ENCODE measurements at regions of chr6 and their contacts with region 1.

Region 1: GRCh38 chr6:28709478-28710349 is 184.0 kb downstream of the GPX5 start:
- DNase-seq: no peak
- ATAC-seq: no peak
- H3K4me3 ChIP-seq: no peak overlapping the region
- H3K4me3 Mint-ChIP-seq: peak overlapping the region; percentile 24
- H3K27ac ChIP-seq: no peak overlapping the region
- H3K27ac Mint-ChIP-seq: no peak overlapping the region
- H3K4me1 ChIP-seq: no peaks in the 10 kb centered on the region
- H3K4me1 Mint-ChIP-seq: peaks cover 11% of the 10 kb centered on the region
- H3K27me3 ChIP-seq: peaks cover 12 to 13% of the 10 kb centered on the region in 2 experiments
- H3K27me3 Mint-ChIP-seq: peaks cover 78% of the 10 kb centered on the region
- CTCF ChIP-seq: no peak

Region 2: DNA sequence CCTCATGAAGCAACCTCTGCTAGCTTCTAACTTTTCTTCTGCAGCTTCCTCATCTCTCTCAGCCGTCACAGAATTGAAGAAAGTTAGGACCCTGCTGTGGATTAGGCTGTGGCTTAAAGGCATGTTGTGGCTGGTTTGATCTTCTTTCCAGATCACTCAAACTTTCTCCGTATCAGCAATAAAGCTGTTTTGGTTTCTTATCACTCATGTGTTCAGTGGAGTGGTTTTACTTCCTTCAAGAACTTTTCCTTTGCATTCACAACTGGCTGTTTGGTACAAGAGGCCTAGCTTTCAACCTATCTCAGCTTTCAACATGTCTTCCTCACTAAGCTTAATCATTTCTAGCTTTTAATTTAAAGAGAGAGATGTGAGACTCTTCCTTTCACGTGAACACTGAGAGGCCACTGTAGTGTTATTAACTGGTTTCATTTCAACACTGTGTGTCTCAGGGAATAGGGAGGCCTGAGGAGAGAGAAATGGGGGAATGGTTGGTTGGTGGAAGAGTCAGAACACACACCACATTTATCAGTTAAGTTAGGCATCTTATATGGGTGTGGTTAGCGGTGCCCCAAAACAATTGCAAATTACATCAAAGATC is 283.7 kb before region 1 on chr6:
- CTCF ChIA-PET with region 1: no interaction called
- POLR2A ChIA-PET with region 1: no interaction called
- intact Hi-C with region 1: no loop called
- DNase-seq: no peak
- ATAC-seq: no peak
- H3K4me3 ChIP-seq: no peak overlapping the region
- H3K4me3 Mint-ChIP-seq: peak overlapping the region; percentile 1
- H3K27ac ChIP-seq: no peak overlapping the region
- H3K27ac Mint-ChIP-seq: peak overlapping the region; percentile 69
- H3K4me1 ChIP-seq: no peaks in the 10 kb centered on the region
- H3K4me1 Mint-ChIP-seq: peaks cover 7% of the 10 kb centered on the region
- H3K27me3 ChIP-seq: no peaks in the 10 kb centered on the region
- H3K27me3 Mint-ChIP-seq: peaks cover 22% of the 10 kb centered on the region
- CTCF ChIP-seq: no peak

Region 3: DNA sequence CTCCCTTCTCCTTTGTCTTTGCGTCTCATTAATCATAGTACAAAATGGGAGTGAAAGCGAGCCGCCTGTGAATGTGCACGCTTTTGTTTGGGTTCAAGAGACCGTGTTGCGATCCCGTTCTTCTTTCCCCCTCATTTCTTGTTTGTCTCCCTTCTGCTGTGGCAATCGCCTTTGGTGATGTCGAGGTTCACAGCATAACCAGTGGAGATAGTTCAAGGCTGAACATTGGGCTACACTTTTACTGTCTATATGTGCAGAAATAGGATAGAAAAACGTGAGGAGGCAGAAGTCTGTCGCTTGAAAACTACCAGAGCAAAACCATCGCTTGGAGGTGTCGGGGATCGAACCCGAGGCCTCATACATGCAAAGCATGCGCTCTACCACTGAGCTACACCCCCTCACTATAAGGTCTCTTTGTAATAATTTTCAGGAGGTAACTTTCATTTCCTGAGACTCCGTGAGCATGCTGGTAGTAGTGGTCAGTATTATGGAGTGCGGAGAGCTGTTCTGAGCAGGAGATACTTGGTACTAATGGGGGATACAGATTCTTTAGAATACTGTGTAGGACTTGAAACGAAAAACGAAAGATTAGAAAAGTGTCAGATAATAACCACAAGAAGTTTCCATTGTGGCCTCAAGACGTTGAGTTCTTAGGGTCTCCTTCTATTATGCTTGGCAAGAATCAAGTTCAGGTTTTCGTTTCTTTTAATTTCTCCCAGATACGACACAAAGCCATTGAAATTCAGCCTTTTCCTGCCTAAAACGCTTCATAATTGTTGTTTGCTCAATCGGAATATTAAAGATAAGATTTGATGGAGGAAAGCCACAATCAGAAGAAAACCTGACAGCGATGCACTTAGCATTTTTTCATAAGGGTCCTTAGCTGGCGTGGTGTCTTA is 107.4 kb after region 1 on chr6:
- CTCF ChIA-PET with region 1: no interaction called
- POLR2A ChIA-PET with region 1: no interaction called
- intact Hi-C with region 1: loop called in 1 of 2 experiments (anchors 10 kb)
- DNase-seq: no peak
- ATAC-seq: no peak
- H3K4me3 ChIP-seq: no peak overlapping the region
- H3K4me3 Mint-ChIP-seq: no peak overlapping the region
- H3K27ac ChIP-seq: no peak overlapping the region
- H3K27ac Mint-ChIP-seq: no peak overlapping the region
- H3K4me1 ChIP-seq: no peaks in the 10 kb centered on the region
- H3K4me1 Mint-ChIP-seq: peaks cover 16% of the 10 kb centered on the region
- H3K27me3 ChIP-seq: peaks cover 50 to 61% of the 10 kb centered on the region in 2 experiments
- H3K27me3 Mint-ChIP-seq: peaks cover 81% of the 10 kb centered on the region
- CTCF ChIP-seq: no peak

Region 4: GRCh38 chr6:28895134-28895812 is 185.6 kb after region 1 on chr6:
- CTCF ChIA-PET with region 1: no interaction called
- POLR2A ChIA-PET with region 1: no interaction called
- intact Hi-C with region 1: no loop called
- DNase-seq: peak; percentile 83 to 97 (median 90)
- ATAC-seq: peak; percentile 68
- H3K4me3 ChIP-seq: peak overlapping the region; percentile 79 to 80
- H3K4me3 Mint-ChIP-seq: peak overlapping the region; percentile 98
- H3K27ac ChIP-seq: peak overlapping the region; percentile 95 to 98
- H3K27ac Mint-ChIP-seq: peak overlapping the region; percentile 99
- H3K4me1 ChIP-seq: peaks cover 8% of the 10 kb centered on the region
- H3K4me1 Mint-ChIP-seq: peaks cover 18% of the 10 kb centered on the region
- H3K27me3 ChIP-seq: no peaks in the 10 kb centered on the region
- H3K27me3 Mint-ChIP-seq: no peaks in the 10 kb centered on the region
- CTCF ChIP-seq: no peak

Region 5: GRCh38 chr6:29797135-29797534 is 1087.4 kb after region 1 on chr6:
- CTCF ChIA-PET with region 1: no interaction called
- POLR2A ChIA-PET with region 1: no interaction called
- intact Hi-C with region 1: no loop called
- DNase-seq: no peak
- ATAC-seq: no peak
- H3K4me3 ChIP-seq: no peak overlapping the region
- H3K4me3 Mint-ChIP-seq: no peak overlapping the region
- H3K27ac ChIP-seq: no peak overlapping the region
- H3K27ac Mint-ChIP-seq: no peak overlapping the region
- H3K4me1 ChIP-seq: peaks cover 5% of the 10 kb centered on the region
- H3K4me1 Mint-ChIP-seq: peaks cover 8% of the 10 kb centered on the region
- H3K27me3 ChIP-seq: peaks cover 0 to 6% of the 10 kb centered on the region in 2 experiments
- H3K27me3 Mint-ChIP-seq: peaks cover 31% of the 10 kb centered on the region
- CTCF ChIP-seq: no peak